WTC11 (cell line): ENCODE measurements at regions of chr3 and their contacts with region 1.

Region 1: GRCh38 chr3:171049861-171050444 is 23.4 kb upstream of the SLC2A2 start:
- DNase-seq: peak; percentile 73
- ATAC-seq: peak; percentile 97
- H3K4me3 Mint-ChIP-seq: no peak overlapping the region
- H3K27ac Mint-ChIP-seq: no peak overlapping the region
- H3K4me1 Mint-ChIP-seq: peaks cover 6% of the 10 kb centered on the region
- H3K27me3 Mint-ChIP-seq: no peaks in the 10 kb centered on the region; the same call in 1 of the 2 replicates
- CTCF ChIP-seq: peak; percentile 45; the same call in 1 of the 2 replicates

Region 2: DNA sequence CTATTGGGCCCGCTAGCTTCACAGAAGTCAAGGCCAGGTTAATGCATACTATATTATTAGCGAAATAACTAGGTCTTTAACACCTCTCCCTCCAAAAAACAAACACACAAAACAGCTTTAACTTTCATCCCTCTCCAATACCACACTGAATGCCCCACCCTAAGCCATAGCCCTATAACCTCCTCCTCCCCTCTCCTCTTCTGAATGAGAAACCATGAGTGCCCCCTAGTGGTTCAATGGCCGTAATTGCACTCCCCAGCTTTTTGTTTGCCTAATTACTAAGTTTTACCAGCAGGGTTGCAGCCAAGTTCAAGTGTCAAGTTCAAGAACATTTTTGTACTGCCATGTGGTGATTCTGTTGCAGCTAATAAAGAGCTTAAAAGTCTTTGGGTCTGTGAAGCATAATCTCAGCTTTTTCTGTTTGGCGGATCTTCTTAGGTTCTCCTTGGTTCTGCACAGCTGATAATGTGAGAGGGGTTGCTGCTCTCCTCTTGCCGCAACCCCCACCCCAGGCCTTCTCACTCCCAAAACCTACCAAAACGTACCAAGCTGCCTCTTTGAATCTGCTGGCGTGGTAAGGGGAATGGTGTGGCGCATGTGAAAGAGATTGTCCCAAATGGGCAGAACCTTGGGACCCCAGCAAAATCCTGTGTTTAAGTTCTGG is 237.9 kb before region 1 on chr3:
- CTCF ChIA-PET with region 1: no interaction called
- POLR2A ChIA-PET with region 1: no interaction called
- DNase-seq: peak; percentile 77
- ATAC-seq: peak; percentile 82
- H3K4me3 Mint-ChIP-seq: no peak overlapping the region
- H3K27ac Mint-ChIP-seq: no peak overlapping the region
- H3K4me1 Mint-ChIP-seq: peaks cover 60% of the 10 kb centered on the region
- H3K27me3 Mint-ChIP-seq: peaks cover 11% of the 10 kb centered on the region
- CTCF ChIP-seq: peak; percentile 84

Region 3: DNA sequence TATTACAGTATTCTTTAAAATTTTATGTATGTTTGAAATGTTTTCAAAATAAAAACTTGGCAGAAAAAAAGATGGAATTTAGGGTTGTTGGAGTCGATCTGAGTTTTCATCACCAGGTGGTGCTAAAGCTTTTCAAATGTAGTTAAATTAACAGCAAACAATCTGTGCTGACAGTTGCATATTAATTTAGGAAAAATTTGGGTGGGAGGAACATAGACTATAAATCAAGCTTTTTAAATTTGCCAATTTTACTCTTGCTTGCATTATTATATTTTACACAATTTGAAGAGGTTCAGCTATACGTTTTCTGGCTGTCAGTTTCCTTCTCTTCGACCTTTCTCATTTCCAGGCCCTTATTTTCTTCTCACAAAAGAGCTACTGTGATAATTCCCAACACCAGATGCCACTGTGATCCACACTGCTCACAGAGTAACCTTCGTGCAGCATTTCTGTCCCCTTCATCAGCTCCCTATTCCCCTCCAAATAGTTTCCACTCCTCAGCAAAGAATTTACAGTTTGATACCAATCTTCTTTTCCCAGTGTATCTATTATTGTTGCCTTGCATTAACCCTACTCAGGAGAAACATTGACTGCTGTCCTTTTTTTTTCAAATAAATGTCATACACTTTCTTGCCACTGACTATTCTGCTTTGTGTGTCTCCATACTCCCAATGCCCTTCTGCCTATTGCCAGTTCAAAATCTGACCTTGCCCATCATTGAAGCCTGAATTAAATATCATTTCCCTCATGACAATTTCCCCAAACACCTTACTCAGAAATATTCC is 88.1 kb before region 1 on chr3:
- CTCF ChIA-PET with region 1: interaction called, 22 read pairs
- POLR2A ChIA-PET with region 1: no interaction called
- DNase-seq: no peak
- ATAC-seq: no peak; the same call in 1 of the 2 replicates
- H3K4me3 Mint-ChIP-seq: no peak overlapping the region
- H3K27ac Mint-ChIP-seq: no peak overlapping the region
- H3K4me1 Mint-ChIP-seq: no peaks in the 10 kb centered on the region
- H3K27me3 Mint-ChIP-seq: no peaks in the 10 kb centered on the region
- CTCF ChIP-seq: peak; percentile 28; the same call in 1 of the 2 replicates

Region 4: DNA sequence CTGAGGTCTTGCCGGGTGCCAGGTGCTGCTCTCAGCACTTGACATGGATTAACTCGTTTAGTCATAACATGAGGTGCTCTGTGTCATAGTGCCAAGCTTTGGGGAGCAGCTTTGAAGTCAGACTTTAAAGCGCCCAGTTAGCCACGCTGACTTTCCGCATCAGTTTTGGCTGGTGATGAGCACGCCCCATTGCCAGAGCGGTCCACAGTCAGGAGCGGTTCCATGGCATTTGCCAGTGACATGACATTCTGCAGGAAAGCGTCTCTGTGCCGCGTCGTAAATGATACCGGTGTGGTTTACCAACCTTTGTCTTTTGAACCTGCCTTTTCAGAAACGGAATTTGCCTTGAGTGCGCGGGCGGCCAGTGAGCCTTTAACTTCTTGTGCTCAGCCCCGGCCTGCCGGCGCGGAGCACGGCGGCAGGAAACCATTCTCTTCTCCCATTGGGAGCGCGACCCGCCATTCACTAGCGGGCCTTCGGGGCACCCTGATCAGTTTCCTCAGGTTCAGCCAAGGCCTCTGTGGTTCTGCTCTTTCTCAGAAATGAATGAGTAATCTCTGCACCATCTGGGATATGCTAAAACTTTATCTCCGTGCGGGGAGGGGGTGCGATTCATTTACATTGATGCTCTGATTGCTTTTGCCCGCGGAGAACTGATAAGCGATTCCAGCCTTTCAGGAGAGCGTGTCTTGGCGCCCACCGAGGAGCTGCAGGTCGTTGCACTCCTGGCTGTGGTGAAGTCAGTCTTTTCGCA is 21.8 kb before region 1 on chr3:
- CTCF ChIA-PET with region 1: interaction called, 13 read pairs
- POLR2A ChIA-PET with region 1: no interaction called
- DNase-seq: peak; percentile 63
- ATAC-seq: peak; percentile 96
- H3K4me3 Mint-ChIP-seq: no peak overlapping the region
- H3K27ac Mint-ChIP-seq: no peak overlapping the region
- H3K4me1 Mint-ChIP-seq: no peaks in the 10 kb centered on the region; the same call in 1 of the 2 replicates
- H3K27me3 Mint-ChIP-seq: no peaks in the 10 kb centered on the region; the same call in 1 of the 2 replicates
- CTCF ChIP-seq: no peak

Region 5: DNA sequence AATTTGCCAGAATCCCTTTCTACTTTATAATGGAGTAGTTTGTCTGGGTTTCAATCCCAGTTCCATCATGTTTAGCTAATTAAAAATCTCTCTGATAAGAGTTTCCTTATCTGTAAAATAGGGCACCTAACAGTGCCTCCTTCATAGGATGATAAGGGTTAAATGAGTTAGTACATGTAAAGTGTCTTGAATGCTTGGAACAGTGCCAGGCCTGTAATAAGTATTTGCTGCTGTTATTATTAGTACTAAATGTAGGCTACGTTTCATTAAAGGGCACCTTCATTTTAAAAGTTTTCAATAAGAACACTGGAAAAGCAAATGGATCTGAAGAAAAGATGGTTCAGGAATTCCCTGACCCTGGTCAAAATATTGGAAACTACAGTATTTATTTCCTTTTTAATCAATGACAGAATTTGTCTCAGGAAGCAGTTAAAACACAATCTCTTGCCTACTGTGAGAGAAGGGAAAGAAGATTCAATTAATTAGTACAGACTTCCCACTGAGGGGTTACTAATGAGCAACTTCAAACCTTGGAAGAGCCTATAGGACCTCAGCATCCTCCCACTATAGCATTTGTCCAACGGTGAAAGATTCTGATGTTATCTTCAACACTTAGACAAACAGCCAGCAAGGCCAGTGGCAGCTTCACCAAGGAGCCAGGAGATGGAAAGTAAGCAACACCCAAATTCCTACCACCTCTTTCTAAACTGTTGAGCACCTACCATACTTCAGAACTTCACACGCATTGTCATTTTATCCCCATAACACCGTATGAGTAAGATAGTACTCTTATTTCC is 11.4 kb before region 1 on chr3:
- CTCF ChIA-PET with region 1: interaction called, 10 read pairs
- POLR2A ChIA-PET with region 1: no interaction called
- DNase-seq: no peak
- ATAC-seq: no peak
- H3K4me3 Mint-ChIP-seq: no peak overlapping the region
- H3K27ac Mint-ChIP-seq: no peak overlapping the region
- H3K4me1 Mint-ChIP-seq: no peaks in the 10 kb centered on the region
- H3K27me3 Mint-ChIP-seq: no peaks in the 10 kb centered on the region
- CTCF ChIP-seq: no peak

Region 6: GRCh38 chr3:171061749-171062148 is 11.8 kb after region 1 on chr3:
- CTCF ChIA-PET with region 1: interaction called, 13 read pairs
- POLR2A ChIA-PET with region 1: no interaction called
- DNase-seq: no peak
- ATAC-seq: peak; percentile 77
- H3K4me3 Mint-ChIP-seq: no peak overlapping the region
- H3K27ac Mint-ChIP-seq: peak overlapping the region; percentile 86
- H3K4me1 Mint-ChIP-seq: peaks cover 19% of the 10 kb centered on the region
- H3K27me3 Mint-ChIP-seq: no peaks in the 10 kb centered on the region
- CTCF ChIP-seq: no peak

Region 7: GRCh38 chr3:171113714-171114113 is 63.8 kb after region 1 on chr3:
- CTCF ChIA-PET with region 1: interaction called, 12 read pairs
- POLR2A ChIA-PET with region 1: no interaction called
- DNase-seq: peak; percentile 45
- ATAC-seq: peak; percentile 97
- H3K4me3 Mint-ChIP-seq: no peak overlapping the region
- H3K27ac Mint-ChIP-seq: no peak overlapping the region
- H3K4me1 Mint-ChIP-seq: peaks cover 14% of the 10 kb centered on the region
- H3K27me3 Mint-ChIP-seq: peaks cover 9% of the 10 kb centered on the region
- CTCF ChIP-seq: no peak